Activated B cell treated with CpG ODN at 0.5 μM for 24 hours (primary cell): ENCODE measurements at regions of chr22 and their contacts with region 1.

Region 1: GRCh38 chr22:33565580-33565995 is 354.7 kb downstream of the LARGE1 start:
- DNase-seq: no peak
- ATAC-seq: no peak
- H3K4me3 Mint-ChIP-seq: no peak overlapping the region
- H3K27ac Mint-ChIP-seq: peak overlapping the region; percentile 8
- H3K4me1 Mint-ChIP-seq: peaks cover 81% of the 10 kb centered on the region
- H3K27me3 Mint-ChIP-seq: no peaks in the 10 kb centered on the region
- CTCF ChIP-seq: no peak

Region 2: DNA sequence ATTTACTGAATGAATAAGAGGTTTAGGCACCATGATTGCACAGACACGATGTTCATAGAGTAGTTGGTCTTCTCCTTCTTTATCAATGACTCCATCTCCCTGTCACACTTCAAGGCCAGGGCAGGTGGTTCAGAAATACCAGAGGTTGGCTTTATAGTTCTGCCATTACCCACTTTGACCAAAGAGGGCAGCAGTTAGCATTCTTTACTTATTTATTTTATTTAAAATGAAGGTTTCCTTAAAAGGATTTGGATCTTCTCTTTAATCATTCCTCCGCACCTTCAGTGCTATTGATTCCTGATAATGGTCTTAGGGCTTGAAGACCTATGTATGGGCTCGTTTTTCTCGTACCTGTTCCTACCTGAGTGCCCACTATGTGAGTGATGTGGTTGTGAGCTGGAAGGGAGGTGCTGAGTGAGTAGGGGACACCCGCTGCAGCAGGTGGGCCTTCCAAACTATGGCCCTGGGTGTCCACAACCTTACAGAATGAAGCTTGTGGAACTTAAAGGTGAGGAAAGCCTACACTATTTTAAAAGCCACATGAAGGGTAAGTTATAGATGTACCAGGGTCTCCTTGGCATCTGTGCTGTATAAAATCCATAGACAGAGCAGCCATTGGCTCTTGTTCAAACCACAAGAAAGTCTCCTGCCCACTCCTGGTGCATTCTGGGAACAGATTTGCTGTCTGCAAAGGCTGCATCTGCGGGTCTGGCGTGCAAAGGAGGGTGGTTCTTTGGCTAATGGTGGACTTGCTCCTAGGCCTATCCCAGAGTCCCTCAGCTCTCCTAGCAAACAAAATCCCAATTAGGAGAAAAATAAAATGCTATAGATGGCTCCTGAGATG is 729.1 kb before region 1 on chr22:
- CTCF ChIA-PET with region 1: no interaction called
- POLR2A ChIA-PET with region 1: no interaction called
- intact Hi-C with region 1: no loop called
- DNase-seq: no peak
- ATAC-seq: no peak
- H3K4me3 Mint-ChIP-seq: no peak overlapping the region
- H3K27ac Mint-ChIP-seq: no peak overlapping the region
- H3K4me1 Mint-ChIP-seq: peaks cover 3% of the 10 kb centered on the region
- H3K27me3 Mint-ChIP-seq: peaks cover 3% of the 10 kb centered on the region
- CTCF ChIP-seq: no peak

Region 3: GRCh38 chr22:33362702-33363101 is 202.9 kb before region 1 on chr22:
- CTCF ChIA-PET with region 1: no interaction called
- POLR2A ChIA-PET with region 1: no interaction called
- intact Hi-C with region 1: loop called (anchors 2 kb)
- DNase-seq: no peak
- ATAC-seq: no peak
- H3K4me3 Mint-ChIP-seq: no peak overlapping the region
- H3K27ac Mint-ChIP-seq: peak overlapping the region; percentile 56
- H3K4me1 Mint-ChIP-seq: peaks cover 24% of the 10 kb centered on the region
- H3K27me3 Mint-ChIP-seq: no peaks in the 10 kb centered on the region
- CTCF ChIP-seq: no peak

Region 4: GRCh38 chr22:33380789-33381530 is 184.6 kb before region 1 on chr22:
- CTCF ChIA-PET with region 1: no interaction called
- POLR2A ChIA-PET with region 1: no interaction called
- intact Hi-C with region 1: no loop called
- DNase-seq: no peak
- ATAC-seq: no peak
- H3K4me3 Mint-ChIP-seq: no peak overlapping the region
- H3K27ac Mint-ChIP-seq: no peak overlapping the region
- H3K4me1 Mint-ChIP-seq: no peaks in the 10 kb centered on the region
- H3K27me3 Mint-ChIP-seq: no peaks in the 10 kb centered on the region
- CTCF ChIP-seq: no peak

Region 5: GRCh38 chr22:33579448-33580093 is 14.0 kb after region 1 on chr22:
- CTCF ChIA-PET with region 1: interaction called, 15 read pairs
- POLR2A ChIA-PET with region 1: interaction called, 3 read pairs
- intact Hi-C with region 1: loop called (anchors 1 kb)
- DNase-seq: peak; percentile 30
- ATAC-seq: peak; percentile 80
- H3K4me3 Mint-ChIP-seq: peak overlapping the region; percentile 42
- H3K27ac Mint-ChIP-seq: no peak overlapping the region
- H3K4me1 Mint-ChIP-seq: peaks cover 55% of the 10 kb centered on the region
- H3K27me3 Mint-ChIP-seq: no peaks in the 10 kb centered on the region
- CTCF ChIP-seq: peak; percentile 73

Region 6: DNA sequence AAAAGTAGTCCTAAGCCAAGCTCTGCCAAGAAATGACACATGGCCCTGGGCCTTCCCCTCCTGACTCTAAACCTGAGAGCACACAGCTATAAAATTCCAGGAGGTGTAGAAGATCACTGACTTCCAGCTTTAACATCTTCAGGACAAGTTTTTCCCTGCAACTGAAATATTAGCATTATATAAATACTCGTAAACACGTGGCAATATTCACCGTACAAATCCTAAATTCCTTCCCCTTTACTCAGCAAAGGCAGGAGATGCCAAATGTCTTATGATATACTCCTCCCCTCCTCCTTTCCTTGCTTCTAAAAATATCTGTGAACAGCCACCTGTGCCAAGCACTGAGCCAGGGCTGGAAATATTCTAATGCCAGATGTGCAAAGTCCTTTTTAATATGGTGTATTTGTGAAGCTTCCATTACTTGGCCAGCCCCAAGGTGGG is 160.7 kb after region 1 on chr22:
- CTCF ChIA-PET with region 1: no interaction called
- POLR2A ChIA-PET with region 1: interaction called, 11 read pairs
- intact Hi-C with region 1: no loop called
- DNase-seq: no peak
- ATAC-seq: no peak
- H3K4me3 Mint-ChIP-seq: no peak overlapping the region
- H3K27ac Mint-ChIP-seq: no peak overlapping the region
- H3K4me1 Mint-ChIP-seq: peaks cover 21% of the 10 kb centered on the region
- H3K27me3 Mint-ChIP-seq: no peaks in the 10 kb centered on the region
- CTCF ChIP-seq: no peak